Activated CD4-positive, alpha-beta T cell treated with anti-CD3 and anti-CD28 coated beads for 36 hours (primary cell): ENCODE measurements at regions of chr1 and their contacts with region 1.

Region 1: DNA sequence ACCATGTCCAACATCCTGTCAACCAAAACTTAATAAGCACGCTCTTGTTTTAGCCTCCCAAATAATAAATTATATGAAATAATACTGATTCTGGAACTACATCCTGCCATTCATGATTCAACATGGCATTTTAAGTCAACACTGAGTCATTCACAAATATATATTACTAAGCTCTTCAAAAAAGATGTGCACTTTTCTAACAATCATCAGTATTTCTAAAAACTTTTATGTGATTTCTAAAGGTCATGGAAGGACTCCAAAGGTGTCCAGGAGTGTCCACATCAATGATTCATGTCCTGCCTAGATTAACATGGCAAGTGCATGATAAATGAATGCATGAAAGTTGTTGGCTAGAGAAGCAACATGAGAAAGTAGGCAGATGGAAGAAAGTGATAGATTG is 51.6 kb downstream of the NEGR1 start:
- DNase-seq: no peak
- ATAC-seq: no peak
- H3K4me3 Mint-ChIP-seq: no peak overlapping the region
- H3K27ac Mint-ChIP-seq: no peak overlapping the region
- H3K4me1 Mint-ChIP-seq: no peaks in the 10 kb centered on the region
- H3K27me3 Mint-ChIP-seq: no peaks in the 10 kb centered on the region

Region 2: DNA sequence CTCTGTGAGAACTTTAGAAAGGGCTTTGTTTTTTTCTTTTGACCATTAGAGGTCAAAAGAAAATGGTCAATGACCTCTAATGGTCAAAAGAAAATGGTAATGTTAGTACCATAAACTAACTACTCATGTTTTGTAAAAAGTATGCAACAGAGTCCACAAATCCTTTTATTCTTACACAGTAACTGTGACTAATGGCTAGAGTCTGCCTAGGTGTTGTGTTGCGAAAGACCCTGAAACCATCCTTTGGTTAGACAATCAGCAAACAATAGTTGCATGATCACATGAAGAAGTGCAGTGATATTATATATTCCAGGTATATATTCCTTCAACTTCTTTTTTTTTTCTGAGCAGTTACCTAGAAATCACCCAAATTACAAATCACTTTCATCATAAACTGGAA is 10.7 kb after region 1 on chr1:
- CTCF ChIA-PET with region 1: no interaction called
- POLR2A ChIA-PET with region 1: no interaction called
- intact Hi-C with region 1: loop called in 1 of 2 experiments (anchors 1 kb)
- DNase-seq: no peak
- ATAC-seq: no peak
- H3K4me3 Mint-ChIP-seq: no peak overlapping the region
- H3K27ac Mint-ChIP-seq: no peak overlapping the region
- H3K4me1 Mint-ChIP-seq: no peaks in the 10 kb centered on the region
- H3K27me3 Mint-ChIP-seq: no peaks in the 10 kb centered on the region

Region 3: DNA sequence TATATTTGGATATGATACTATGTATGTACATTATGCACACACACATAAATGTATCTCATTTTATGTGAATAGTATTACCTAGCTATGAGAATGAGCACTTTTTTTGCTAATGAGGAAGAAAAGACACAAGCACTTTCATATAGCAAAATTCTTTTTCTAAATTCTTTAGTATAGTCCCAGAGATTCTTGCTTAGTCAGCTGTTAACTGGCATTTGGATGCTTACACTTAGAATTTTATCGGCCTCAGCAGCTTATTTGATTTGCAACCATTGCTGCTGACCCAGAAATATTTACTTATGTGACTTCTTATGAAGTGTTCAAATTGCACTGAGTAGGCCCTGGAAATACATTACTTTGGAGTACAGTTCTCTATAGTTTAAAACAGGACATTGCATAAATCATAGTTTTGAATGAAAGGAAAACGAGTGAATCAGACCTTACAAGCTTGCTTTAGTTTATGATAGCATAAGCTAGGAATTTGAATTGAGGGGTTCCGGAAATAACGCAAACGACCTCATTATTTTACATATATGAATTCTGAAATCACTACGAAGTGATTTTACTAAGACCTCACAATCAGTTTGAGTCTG is 705.5 kb after region 1 on chr1:
- CTCF ChIA-PET with region 1: no interaction called
- POLR2A ChIA-PET with region 1: no interaction called
- intact Hi-C with region 1: no loop called
- DNase-seq: no peak
- ATAC-seq: no peak
- H3K4me3 Mint-ChIP-seq: no peak overlapping the region
- H3K27ac Mint-ChIP-seq: no peak overlapping the region
- H3K4me1 Mint-ChIP-seq: no peaks in the 10 kb centered on the region
- H3K27me3 Mint-ChIP-seq: no peaks in the 10 kb centered on the region